Endothelial cell of umbilical vein (primary cell): ENCODE measurements at regions of chr11 and their contacts with region 1.

Region 1: GRCh38 chr11:72430741-72431570 is 3.4 kb downstream of the CLPB start:
- DNase-seq: peak; percentile 52
- H3K4me3 ChIP-seq: no peak overlapping the region
- H3K27ac ChIP-seq: no peak overlapping the region
- H3K4me1 ChIP-seq: peaks cover 4% of the 10 kb centered on the region
- H3K27me3 ChIP-seq: no peaks in the 10 kb centered on the region
- CTCF ChIP-seq: peak; percentile 57 to 79
- POLR2A ChIP-seq: no peak

Region 2: DNA sequence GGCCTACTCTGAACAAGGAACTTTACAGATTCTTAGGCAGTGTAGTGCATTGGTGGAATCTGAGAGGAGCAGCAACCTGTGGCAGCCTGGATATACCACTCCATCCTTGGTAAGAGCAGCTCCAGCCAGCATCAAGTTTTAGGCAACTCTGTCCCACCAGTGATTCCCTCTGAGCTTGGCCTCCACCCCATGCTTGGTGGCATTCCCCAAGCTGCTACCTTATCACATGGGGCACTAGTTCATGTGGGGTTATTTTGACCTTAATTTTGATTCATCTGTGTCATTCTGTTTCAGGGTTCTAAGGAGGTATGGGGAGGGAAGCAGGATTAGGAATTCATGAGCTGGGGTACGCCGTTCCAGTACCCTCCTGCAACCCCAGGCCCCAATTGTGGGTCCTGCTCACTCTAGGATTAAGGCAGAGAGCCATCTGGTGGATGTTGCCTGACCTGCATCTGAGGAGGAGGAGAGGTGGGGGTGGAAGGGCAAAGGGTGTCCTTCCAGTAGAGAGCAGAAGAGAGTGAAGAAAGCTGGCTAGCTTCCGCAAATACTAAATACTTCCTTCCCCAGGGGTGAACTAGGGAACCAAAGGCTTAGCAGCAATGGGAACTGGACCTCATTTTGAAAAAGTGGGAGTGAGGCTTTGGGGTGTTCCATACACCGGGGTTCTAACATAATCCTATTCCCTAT is 339.8 kb before region 1 on chr11:
- CTCF ChIA-PET with region 1: interaction called, 15 read pairs
- POLR2A ChIA-PET with region 1: no interaction called
- dilution Hi-C with region 1: no loop called
- intact Hi-C with region 1: no loop called
- DNase-seq: peak; percentile 73
- H3K4me3 ChIP-seq: no peak overlapping the region
- H3K27ac ChIP-seq: no peak overlapping the region
- H3K4me1 ChIP-seq: peaks cover 3% of the 10 kb centered on the region
- H3K27me3 ChIP-seq: no peaks in the 10 kb centered on the region
- CTCF ChIP-seq: peak; percentile 84 to 87
- POLR2A ChIP-seq: no peak

Region 3: GRCh38 chr11:72189461-72190275 is 241.3 kb before region 1 on chr11:
- CTCF ChIA-PET with region 1: interaction called, 19 read pairs
- POLR2A ChIA-PET with region 1: no interaction called
- dilution Hi-C with region 1: no loop called
- intact Hi-C with region 1: no loop called
- DNase-seq: no peak
- H3K4me3 ChIP-seq: no peak overlapping the region
- H3K27ac ChIP-seq: no peak overlapping the region
- H3K4me1 ChIP-seq: no peaks in the 10 kb centered on the region
- H3K27me3 ChIP-seq: peaks cover 0 to 1% of the 10 kb centered on the region in 2 experiments
- CTCF ChIP-seq: no peak
- POLR2A ChIP-seq: no peak

Region 4: GRCh38 chr11:72287293-72287692 is 143.7 kb before region 1 on chr11:
- CTCF ChIA-PET with region 1: interaction called, 39 read pairs
- POLR2A ChIA-PET with region 1: no interaction called
- dilution Hi-C with region 1: no loop called
- intact Hi-C with region 1: loop called (anchors 5 kb)
- DNase-seq: no peak
- H3K4me3 ChIP-seq: no peak overlapping the region
- H3K27ac ChIP-seq: no peak overlapping the region
- H3K4me1 ChIP-seq: no peaks in the 10 kb centered on the region
- H3K27me3 ChIP-seq: peaks cover 7 to 11% of the 10 kb centered on the region in 2 experiments
- CTCF ChIP-seq: no peak
- POLR2A ChIP-seq: no peak

Region 5: GRCh38 chr11:72413914-72414628 is 16.9 kb before region 1 on chr11:
- CTCF ChIA-PET with region 1: interaction called, 39 read pairs
- POLR2A ChIA-PET with region 1: no interaction called
- dilution Hi-C with region 1: no loop called
- intact Hi-C with region 1: no loop called
- DNase-seq: peak; percentile 81
- H3K4me3 ChIP-seq: no peak overlapping the region
- H3K27ac ChIP-seq: no peak overlapping the region
- H3K4me1 ChIP-seq: no peaks in the 10 kb centered on the region
- H3K27me3 ChIP-seq: no peaks in the 10 kb centered on the region
- CTCF ChIP-seq: peak; percentile 90 to 92
- POLR2A ChIP-seq: no peak